ENCODE measurements at regions of chr17 and their contacts with region 1.

Region 1: DNA sequence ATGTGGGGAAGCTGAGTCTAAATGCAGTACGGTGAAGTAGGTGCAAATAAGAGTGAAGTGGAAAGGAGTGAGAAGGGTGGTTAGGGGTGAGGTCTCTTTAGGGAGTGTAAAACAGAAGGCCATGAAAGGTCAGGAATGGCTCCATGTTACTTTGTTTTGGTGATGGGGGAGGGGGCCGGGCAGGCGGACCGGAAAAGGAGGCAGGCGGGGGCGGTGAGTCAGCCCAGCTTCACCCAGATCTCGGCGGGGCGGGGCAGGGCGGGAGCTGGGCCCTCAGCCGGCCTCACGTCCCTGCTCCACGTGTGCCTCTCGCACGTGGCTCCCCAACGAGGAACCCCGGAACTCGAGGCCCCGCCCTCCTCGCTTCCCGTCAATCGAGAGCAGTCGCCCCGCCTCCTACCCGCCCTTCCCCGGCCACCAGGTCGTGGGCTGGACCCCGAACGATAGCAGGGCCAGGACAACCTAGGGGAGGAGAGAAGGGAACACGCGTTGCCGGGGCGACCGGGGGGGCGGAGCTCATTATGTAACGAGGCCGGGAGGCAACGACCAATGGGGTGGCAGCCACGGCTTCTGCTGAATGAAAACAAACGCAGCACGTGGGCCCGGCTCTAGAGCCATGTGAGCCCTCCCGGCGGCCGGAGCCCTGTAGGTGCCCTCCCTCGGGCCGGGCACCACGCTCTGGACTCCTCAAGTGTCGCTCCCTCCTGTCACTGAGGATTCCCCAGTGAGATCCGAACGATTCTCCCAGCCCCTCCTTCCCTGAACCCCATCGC is 1.4 kb downstream of the NR1D1 start:
- DNase-seq: peak; percentile 99
- ATAC-seq: peak; percentile 58 to 66
- H3K4me3 ChIP-seq: peak overlapping the region; percentile 54
- H3K27ac ChIP-seq: peak overlapping the region; percentile 89
- H3K4me1 ChIP-seq: peaks cover 53% of the 10 kb centered on the region
- CTCF ChIP-seq: no peak
- EP300 ChIP-seq: peak in 1 of 2 experiments; percentile 53; a peak in 1 of 5 replicates
- POLR2A ChIP-seq: no peak
- RAD21 ChIP-seq: no peak; a peak in 1 of 5 replicates

Region 2: DNA sequence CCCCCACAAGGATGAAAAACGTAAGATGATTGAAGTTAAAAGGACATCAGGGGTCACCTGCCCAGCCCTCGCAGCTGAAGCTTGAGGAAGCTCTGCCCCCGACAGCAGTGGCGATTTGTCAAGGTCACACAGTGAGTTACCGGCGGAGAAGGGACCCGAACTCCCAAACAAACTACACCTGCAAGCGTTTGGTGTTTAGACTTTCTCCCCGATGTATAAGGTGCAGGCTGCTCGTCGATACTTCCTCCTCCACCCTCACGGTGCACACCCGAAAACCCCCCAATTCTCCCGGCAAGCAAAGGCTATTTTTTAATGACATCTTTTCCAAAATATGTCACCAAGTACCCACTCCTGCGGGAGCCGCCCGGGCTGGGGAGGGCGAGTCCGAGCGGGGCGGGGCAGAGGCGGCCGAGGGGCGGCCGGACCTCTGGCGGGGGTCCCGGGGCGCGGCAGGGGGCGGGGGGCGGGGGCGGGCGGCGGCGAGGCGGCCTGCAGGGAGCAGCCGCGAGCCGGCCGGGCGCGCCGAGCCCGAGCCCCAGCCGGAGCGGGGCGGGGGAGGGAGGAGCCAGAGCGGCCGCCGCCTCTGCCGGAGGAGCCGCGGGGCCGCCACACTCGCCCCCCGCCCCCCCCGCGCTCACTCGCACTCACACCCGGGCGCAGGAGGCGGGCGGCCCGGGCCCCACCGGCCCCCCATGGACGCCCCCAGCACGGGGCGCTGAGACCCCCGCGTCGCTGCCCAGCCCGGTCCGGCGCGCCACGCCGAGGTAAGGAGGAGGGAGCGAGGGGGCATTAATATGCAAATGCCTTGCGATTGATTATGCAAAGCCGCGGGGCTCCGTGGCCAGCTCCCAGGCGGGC is 36.5 kb before region 1 on chr17 and contains the start of gene THRA:
- CTCF ChIA-PET with region 1: interaction called, 390 read pairs
- POLR2A ChIA-PET with region 1: interaction called, 6 read pairs
- DNase-seq: peak in 1 of 2 experiments; percentile 68
- ATAC-seq: peak; percentile 65 to 70
- H3K4me3 ChIP-seq: peak within 1 kb of the TSS; percentile 98
- H3K27ac ChIP-seq: peak within 1 kb of the TSS; percentile 92 to 98
- H3K4me1 ChIP-seq: peaks cover 33% of the 10 kb centered on the region
- CTCF ChIP-seq: peak; percentile 86
- EP300 ChIP-seq: no peak
- POLR2A ChIP-seq: no peak
- RAD21 ChIP-seq: no peak; a peak in 3 of 5 replicates
- polyA plus RNA-seq, gene THRA: 20.1 and 27.4 TPM in 2 replicates

Region 3: GRCh38 chr17:40068917-40069750 is 29.9 kb before region 1 on chr17:
- CTCF ChIA-PET with region 1: interaction called, 390 read pairs
- POLR2A ChIA-PET with region 1: interaction called, 11 read pairs
- DNase-seq: peak in 1 of 2 experiments; percentile 82
- ATAC-seq: peak in 1 of 2 experiments; percentile 2; a peak in 1 of 6 replicates
- H3K4me3 ChIP-seq: peak overlapping the region; percentile 29
- H3K27ac ChIP-seq: peak overlapping the region; percentile 95
- H3K4me1 ChIP-seq: peaks cover 88% of the 10 kb centered on the region
- CTCF ChIP-seq: no peak
- EP300 ChIP-seq: no peak
- POLR2A ChIP-seq: no peak
- RAD21 ChIP-seq: no peak

Region 4: GRCh38 chr17:40086150-40087044 is 12.6 kb before region 1 on chr17:
- CTCF ChIA-PET with region 1: interaction called, 390 read pairs
- POLR2A ChIA-PET with region 1: interaction called, 7 read pairs
- DNase-seq: peak; percentile 70 to 85
- ATAC-seq: peak; percentile 52 to 84; a peak in 4 of 6 replicates
- H3K4me3 ChIP-seq: no peak overlapping the region
- H3K27ac ChIP-seq: no peak overlapping the region
- H3K4me1 ChIP-seq: peaks cover 15% of the 10 kb centered on the region
- CTCF ChIP-seq: peak; percentile 95
- EP300 ChIP-seq: no peak
- POLR2A ChIP-seq: no peak
- RAD21 ChIP-seq: peak; percentile 97

Region 5: DNA sequence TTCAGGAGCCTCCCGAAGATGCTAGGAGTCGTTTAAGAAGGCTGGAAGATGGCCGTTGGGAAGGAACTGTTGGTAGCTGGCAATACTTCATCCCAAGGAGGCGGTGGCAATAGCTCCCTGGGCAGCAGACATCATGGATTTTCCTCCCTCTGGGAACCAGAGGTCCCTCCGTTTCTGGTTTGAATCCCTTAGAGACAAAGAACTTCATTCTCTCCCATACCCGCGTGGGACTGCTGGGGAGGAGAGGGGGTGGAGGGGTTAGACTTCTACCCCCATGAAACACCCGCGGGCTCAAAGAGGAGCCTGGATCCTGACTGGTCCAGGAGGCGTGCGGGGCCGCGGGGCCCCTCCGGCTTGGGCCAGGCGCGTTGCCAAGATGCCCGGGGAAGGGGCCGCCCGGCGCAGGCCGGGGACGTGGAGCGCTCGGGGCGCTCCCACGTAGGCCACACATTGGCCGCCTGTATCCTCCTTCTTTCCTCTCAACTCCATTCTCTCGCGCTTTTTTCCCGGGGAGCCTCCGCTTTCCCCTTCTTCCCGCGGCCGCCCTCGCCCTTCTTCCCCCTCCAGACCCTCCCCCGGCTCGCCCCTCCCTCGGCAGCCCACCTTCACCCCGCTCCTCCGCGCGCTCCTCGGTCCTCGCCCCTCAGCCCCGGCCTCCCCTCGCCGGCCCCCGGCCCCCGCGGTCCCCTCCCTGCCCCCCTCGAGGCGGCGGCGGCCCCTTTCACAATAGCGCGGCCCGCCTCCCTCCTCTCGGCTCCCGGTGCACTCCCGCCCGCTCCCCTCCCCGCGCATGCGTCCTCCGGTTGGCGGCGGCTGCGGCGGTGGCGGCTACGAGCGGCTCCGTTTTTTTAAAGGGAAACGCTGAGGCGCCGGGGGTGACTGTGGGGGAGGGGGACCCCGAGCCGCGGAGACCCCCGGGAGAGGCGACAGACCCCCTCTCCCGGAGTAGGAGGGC is 22.4 kb after region 1 on chr17 and contains the start of gene MSL1:
- CTCF ChIA-PET with region 1: interaction called, 7 read pairs
- POLR2A ChIA-PET with region 1: interaction called, 173 read pairs
- DNase-seq: peak; percentile 83 to 91
- ATAC-seq: peak; percentile 75 to 76
- H3K4me3 ChIP-seq: peak within 1 kb of the TSS; percentile 67
- H3K27ac ChIP-seq: peak within 1 kb of the TSS; percentile 94 to 100
- H3K4me1 ChIP-seq: peaks cover 24% of the 10 kb centered on the region
- CTCF ChIP-seq: no peak
- EP300 ChIP-seq: no peak
- POLR2A ChIP-seq: peak; percentile 46
- RAD21 ChIP-seq: no peak; a peak in 1 of 5 replicates
- polyA plus RNA-seq, gene MSL1: 87.8 and 95.1 TPM in 2 replicates

Region 6: DNA sequence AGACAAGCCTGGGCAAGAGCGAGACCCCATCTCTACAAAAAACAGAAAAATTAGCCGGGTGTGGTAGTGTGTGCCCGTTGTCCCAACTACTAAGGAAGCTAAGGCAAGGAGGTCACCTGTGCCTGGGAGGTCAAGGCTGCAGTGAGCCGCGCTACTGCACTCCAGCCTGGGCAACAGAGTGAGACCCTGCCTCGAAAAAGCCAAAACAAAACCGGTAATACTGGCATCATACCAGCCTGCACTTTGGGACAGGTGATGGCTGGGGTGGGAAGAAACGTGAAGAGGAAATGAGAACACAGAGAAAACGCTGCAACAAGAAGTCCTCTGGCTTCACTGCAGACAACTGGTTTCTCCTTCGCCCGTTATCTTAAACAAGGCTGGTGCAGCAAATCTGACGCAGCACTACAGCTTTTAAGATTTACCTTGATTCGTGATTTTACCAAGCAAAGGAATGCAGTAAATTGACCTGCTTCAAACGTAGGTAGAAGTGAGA is 40.6 kb after region 1 on chr17:
- CTCF ChIA-PET with region 1: no interaction called
- POLR2A ChIA-PET with region 1: interaction called, 25 read pairs
- DNase-seq: no peak
- ATAC-seq: peak; percentile 13 to 36
- H3K4me3 ChIP-seq: peak overlapping the region; percentile 58
- H3K27ac ChIP-seq: peak overlapping the region; percentile 91 to 98
- H3K4me1 ChIP-seq: peaks cover 16% of the 10 kb centered on the region; the same call in 2 of the 3 replicates
- CTCF ChIP-seq: no peak
- EP300 ChIP-seq: no peak
- POLR2A ChIP-seq: no peak
- RAD21 ChIP-seq: no peak

Region 7: GRCh38 chr17:40224718-40225550 is 125.9 kb after region 1 on chr17:
- CTCF ChIA-PET with region 1: no interaction called
- POLR2A ChIA-PET with region 1: no interaction called
- DNase-seq: no peak
- ATAC-seq: no peak
- H3K4me3 ChIP-seq: no peak overlapping the region
- H3K27ac ChIP-seq: no peak overlapping the region
- H3K4me1 ChIP-seq: peaks cover 12% of the 10 kb centered on the region; the same call in 2 of the 3 replicates
- CTCF ChIP-seq: no peak
- EP300 ChIP-seq: no peak
- POLR2A ChIP-seq: no peak
- RAD21 ChIP-seq: no peak

Measured in A549 (cell line).